ENCODE measurements at regions of chr6 and their contacts with region 1.

Region 1: DNA sequence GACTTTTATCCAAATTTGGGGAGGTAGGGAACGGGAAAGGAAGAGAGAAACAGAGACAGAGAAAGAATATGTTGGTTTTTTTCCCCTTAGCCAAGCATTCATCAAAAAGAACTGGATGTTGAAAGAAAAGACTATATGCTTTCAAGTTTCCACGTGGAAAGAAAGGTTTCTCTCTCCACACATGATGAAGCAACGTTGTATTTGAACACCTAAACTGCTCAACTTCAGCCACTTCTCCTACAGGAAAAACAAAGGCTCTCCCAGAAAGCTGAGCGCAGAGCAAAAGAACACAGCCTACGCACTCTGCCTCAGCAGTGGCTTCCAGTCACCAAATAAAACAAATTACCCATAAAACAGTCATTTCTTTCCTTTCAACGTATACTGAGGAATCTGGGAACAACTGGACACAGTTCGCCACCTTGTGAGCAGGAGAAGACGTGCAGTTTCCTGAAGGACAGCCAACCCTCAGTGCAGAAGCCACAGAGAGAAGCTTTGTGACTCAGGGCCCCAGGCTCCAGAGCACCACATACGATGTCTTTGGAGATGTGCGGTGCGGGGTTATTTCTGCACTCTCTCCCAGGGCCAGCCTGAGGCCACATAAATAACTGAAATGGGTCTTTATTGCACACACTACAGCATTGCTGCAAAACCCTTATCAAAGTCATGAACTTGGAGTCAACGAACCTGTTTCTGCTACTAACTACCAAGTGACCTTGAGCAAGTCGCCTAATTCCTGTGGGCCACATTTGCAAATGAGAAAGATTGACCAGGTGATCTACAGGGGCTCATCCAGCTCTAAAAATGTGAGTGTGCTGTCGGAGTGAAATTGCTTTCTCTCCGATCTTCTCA is 10.1 kb downstream of the IL17F start:
- DNase-seq: no peak
- ATAC-seq: no peak

Region 2: DNA sequence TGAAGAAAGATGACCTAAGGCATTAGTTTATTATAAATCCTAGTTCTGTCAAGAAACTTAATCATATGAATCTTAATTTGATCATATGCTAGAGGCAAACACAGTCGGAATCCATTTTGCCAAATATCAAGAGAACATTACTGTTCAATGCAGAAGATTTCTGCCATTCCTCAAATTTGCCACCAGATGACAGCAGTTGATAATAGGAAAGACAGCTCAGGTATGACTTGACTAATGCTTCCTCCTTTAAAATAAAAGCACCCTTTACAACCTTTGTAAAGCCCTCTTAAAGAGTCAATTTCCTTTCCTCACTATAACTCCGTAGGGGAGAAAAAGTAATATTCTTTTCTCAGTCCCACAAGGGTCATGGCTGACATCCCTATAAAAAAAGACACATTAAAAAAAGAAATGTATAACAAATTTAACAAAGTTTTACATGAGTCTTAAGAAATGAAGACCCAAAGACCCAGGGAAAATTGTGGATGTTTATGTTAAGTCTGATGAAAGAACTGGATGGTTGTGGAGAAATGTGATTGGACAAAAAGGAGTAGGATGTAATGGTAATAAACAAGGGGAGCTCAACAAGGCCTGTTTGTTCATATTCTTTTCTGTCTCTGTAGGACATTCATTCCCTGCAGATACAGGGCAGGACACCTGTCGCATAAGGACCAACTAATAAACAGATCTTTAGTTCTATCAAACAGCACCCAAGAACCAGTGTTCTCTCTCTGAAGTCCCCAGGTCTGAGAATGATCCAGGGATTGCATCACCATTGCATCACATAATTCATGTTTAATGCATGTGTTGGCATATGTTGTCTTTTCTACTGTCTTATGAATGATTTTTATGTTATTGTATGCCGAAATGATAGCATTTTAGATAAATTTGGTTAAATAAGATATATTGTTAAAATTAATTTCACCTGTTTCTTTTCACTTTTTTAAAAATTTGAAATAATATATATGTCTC is 71.0 kb before region 1 on chr6:
- intact Hi-C with region 1: loop called (anchors 5 kb)
- DNase-seq: no peak
- ATAC-seq: no peak

Region 3: DNA sequence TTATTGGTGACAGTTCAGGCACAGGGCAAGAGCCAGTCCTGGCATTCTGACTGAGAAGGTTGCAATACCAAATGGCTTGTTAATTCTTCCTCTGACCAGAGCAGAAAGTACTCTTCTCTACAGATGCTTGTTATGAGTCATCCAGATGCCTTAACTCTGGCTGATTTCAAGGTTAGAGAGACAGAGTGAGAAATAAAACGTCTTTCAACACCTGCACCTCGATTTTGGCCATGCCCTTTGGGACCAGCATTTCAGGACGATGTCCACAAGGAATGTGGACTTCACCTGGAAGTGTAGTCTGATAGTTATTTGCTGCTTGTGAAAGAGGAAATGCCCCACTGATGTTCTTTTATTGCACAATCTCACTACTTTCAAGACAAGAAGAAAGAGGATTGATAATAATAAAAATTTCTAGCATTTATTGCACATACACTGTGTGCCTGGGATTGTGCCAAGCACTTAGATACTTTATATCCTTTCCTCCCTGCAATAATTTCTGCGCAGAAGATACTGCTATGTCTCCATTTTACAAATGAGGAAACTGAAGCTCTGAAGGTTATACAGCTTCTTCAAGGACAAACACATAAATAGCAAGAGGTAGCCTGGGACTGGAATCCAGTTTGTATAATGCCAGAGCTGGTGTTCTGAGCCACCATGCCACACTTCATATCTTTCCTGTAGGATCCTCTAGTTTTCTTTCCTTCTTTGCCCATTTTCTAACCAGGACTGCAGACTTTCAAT is 83.8 kb after region 1 on chr6:
- intact Hi-C with region 1: no loop called
- DNase-seq: no peak
- ATAC-seq: no peak

Measured in Right ventricle myocardium inferior (tissue), 1 donor.